ENCODE measurements at regions of chr11 and their contacts with region 1.

Region 1: DNA sequence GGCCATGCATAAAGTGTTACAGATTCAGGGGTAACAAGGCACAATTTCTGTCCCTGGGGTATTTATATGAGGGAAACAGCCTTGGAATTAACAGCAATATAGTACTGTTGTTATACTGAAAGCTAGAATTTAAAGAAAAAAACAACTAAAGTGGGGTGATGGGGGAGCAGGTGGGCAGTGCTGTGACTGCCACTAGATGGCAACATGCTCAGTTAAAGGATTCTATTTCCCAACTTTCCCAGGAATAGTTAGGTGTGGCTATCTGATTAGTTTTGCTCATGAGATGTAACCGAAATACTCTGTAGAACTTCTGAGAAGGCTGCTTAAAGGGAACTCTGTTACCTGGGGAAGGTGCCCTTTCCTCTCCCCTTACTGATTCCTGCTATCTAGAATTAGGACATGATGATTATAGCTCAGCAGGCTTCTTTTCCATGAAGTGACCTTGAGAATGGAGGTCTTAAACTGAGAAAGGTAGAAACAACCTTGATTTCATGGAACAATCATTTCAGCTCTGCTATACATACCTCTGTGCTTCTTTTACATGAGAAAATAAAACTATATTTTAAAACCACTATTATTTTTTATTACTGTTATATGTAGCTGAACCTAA is 102.6 kb downstream of the RELT start:
- DNase-seq: peak; percentile 45
- H3K4me3 ChIP-seq: peak overlapping the region in 1 of 2 experiments; percentile 12; a peak in 1 of 4 replicates
- H3K27ac ChIP-seq: no peak overlapping the region
- H3K4me1 ChIP-seq: peaks cover 0 to 2% of the 10 kb centered on the region in 2 experiments; a peak in 2 of 4 replicates
- H3K27me3 ChIP-seq: no peaks in the 10 kb centered on the region
- CTCF ChIP-seq: peak; percentile 84
- EP300 ChIP-seq: no peak
- RAD21 ChIP-seq: peak; percentile 77

Region 2: DNA sequence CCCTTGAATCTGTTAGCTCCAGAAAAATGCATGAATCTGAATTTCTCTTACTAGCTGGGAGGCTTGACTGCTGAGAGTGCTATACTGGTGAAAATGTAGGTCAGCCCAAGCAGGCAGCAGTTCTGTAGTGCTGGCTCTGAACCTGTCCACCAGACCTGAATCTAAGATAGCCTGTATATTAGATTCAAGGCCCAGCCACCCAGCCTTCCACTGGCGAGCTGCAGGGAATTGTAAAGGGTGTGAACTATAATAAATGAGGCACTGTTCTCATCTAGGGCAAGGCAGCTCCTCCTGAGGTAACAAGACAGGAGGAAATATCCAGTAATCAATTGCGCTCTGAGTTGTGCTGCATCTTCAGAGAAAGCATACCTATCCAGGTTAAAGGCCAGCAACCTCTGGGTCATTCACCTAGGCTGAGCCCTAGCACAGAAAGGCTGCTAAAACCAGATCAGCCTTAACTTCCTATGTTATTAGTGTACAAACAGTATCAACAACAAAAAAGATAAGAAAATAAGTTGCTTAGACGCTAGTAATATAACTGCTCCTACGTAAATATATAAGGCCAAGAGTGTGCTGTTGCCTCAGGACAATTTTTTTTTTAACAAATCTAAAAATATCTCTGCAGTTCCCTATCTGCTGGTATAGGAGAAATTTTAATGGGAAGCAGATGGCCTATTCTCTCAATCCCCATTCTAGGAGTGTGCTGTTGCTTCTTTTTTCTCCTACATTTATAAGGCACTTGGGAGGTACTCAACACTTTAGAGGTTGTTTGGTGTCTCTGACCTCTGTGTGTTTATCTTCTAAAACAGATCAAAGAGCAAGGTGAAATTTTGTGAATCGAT is 39.6 kb before region 1 on chr11:
- CTCF ChIA-PET with region 1: interaction called, 14 read pairs
- POLR2A ChIA-PET with region 1: no interaction called
- DNase-seq: peak; percentile 61
- H3K4me3 ChIP-seq: no peak overlapping the region
- H3K27ac ChIP-seq: peak overlapping the region; percentile 38 to 90; a peak in 3 of 4 replicates
- H3K4me1 ChIP-seq: peaks cover 0 to 19% of the 10 kb centered on the region in 2 experiments; a peak in 3 of 4 replicates
- H3K27me3 ChIP-seq: no peaks in the 10 kb centered on the region
- CTCF ChIP-seq: no peak
- EP300 ChIP-seq: peak in 1 of 2 experiments; percentile 73; a peak in 2 of 4 replicates
- RAD21 ChIP-seq: 0 out of 2 replicates have a peak, but pooled peaks have one; percentile 9

Region 3: DNA sequence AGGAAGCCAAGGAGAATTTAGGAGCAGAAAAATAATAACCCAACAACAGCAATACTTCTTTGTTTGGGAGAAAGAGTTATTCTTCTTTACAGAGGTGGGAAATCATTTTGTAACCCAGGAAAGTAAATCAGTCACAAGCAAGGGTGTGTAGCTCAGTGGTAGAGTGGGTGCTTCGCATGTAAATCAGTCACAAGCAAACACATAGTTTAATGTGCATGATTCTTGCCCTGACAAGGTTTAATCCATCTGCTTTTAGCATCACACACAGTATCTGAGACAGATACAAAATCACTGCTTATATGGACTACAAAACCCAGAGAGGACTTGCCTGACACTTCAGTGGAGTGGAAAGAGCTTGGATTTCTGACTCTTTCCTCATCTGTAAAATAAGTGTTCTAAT is 20.6 kb before region 1 on chr11:
- CTCF ChIA-PET with region 1: interaction called, 85 read pairs
- POLR2A ChIA-PET with region 1: no interaction called
- DNase-seq: no peak
- H3K4me3 ChIP-seq: no peak overlapping the region
- H3K27ac ChIP-seq: no peak overlapping the region
- H3K4me1 ChIP-seq: peaks cover 0 to 10% of the 10 kb centered on the region in 2 experiments; a peak in 2 of 4 replicates
- H3K27me3 ChIP-seq: no peaks in the 10 kb centered on the region
- CTCF ChIP-seq: no peak
- EP300 ChIP-seq: no peak
- RAD21 ChIP-seq: no peak

Region 4: DNA sequence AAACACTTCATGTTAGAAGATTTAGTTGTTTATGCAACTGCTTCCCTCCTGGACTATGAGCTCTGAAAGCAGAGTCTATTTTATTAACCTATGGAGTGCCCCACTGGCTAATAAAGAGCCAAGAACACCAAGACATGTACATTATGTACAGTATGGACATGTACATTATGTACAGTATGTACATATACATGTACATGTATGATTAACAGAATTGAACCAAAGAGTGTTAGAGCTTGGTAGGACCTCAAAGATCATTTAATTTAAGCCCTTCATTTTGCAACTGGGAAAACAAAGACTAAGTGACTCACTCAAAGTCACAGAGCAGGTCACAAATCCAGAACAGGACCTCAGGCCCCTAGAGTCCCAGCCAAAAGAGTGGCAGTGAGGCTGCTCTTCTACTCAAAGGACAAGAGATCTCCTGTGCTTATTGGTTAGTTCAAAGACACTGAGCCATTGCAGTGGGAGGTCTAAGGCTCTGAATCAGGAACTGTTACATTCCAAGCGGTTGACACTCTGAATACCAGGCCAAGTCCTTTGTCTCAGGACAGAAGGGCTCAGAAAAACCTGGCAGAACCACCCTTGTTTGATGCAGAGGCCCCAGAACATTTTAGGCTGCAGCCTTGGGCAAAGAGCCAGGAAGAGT is 15.2 kb after region 1 on chr11:
- CTCF ChIA-PET with region 1: interaction called, 48 read pairs
- POLR2A ChIA-PET with region 1: no interaction called
- DNase-seq: no peak
- H3K4me3 ChIP-seq: no peak overlapping the region
- H3K27ac ChIP-seq: peak overlapping the region in 1 of 2 experiments; percentile 63; a peak in 2 of 4 replicates
- H3K4me1 ChIP-seq: peaks cover 0 to 8% of the 10 kb centered on the region in 2 experiments; a peak in 2 of 4 replicates
- H3K27me3 ChIP-seq: no peaks in the 10 kb centered on the region
- CTCF ChIP-seq: no peak
- EP300 ChIP-seq: peak in 1 of 2 experiments; percentile 60; a peak in 1 of 4 replicates
- RAD21 ChIP-seq: no peak

Region 5: GRCh38 chr11:73597956-73598718 is 119.3 kb after region 1 on chr11 and contains the start of gene FAM168A:
- CTCF ChIA-PET with region 1: interaction called, 19 read pairs
- POLR2A ChIA-PET with region 1: no interaction called
- DNase-seq: peak; percentile 96
- H3K4me3 ChIP-seq: peak within 1 kb of the TSS; percentile 71 to 76
- H3K27ac ChIP-seq: peak within 1 kb of the TSS; percentile 70 to 92
- H3K4me1 ChIP-seq: peaks cover 9 to 12% of the 10 kb centered on the region in 2 experiments; a peak in 3 of 4 replicates
- H3K27me3 ChIP-seq: no peaks in the 10 kb centered on the region
- CTCF ChIP-seq: 0 out of 2 replicates have a peak, but pooled peaks have one; percentile 27
- EP300 ChIP-seq: no peak
- RAD21 ChIP-seq: no peak; the same call in 1 of the 2 replicates
- polyA plus RNA-seq, gene FAM168A: 17.8 and 18.2 TPM in 2 replicates

Region 6: GRCh38 chr11:73647459-73648100 is 168.7 kb after region 1 on chr11:
- CTCF ChIA-PET with region 1: interaction called, 13 read pairs
- POLR2A ChIA-PET with region 1: no interaction called
- DNase-seq: peak; percentile 87
- H3K4me3 ChIP-seq: peak overlapping the region in 1 of 2 experiments; percentile 20; a peak in 2 of 4 replicates
- H3K27ac ChIP-seq: no peak overlapping the region
- H3K4me1 ChIP-seq: peaks cover 0 to 7% of the 10 kb centered on the region in 2 experiments; a peak in 1 of 4 replicates
- H3K27me3 ChIP-seq: no peaks in the 10 kb centered on the region
- CTCF ChIP-seq: no peak
- EP300 ChIP-seq: no peak
- RAD21 ChIP-seq: no peak

Measured in SK-N-SH (cell line).